CD8-positive, alpha-beta T cell (primary cell): ENCODE measurements at regions of chr7 and their contacts with region 1.

Region 1: GRCh38 chr7:107890962-107891635 is at the start of gene DLD:
- DNase-seq: peak; percentile 86 to 97 (median 93)
- ATAC-seq: peak; percentile 97
- H3K4me3 ChIP-seq: peak within 1 kb of the TSS; percentile 79 to 86
- H3K4me3 Mint-ChIP-seq: peak within 1 kb of the TSS; percentile 98
- H3K27ac ChIP-seq: peak within 1 kb of the TSS; percentile 88 to 94
- H3K27ac Mint-ChIP-seq: peak within 1 kb of the TSS; percentile 98
- H3K4me1 ChIP-seq: peaks cover 48% of the 10 kb centered on the region
- H3K4me1 Mint-ChIP-seq: peaks cover 48% of the 10 kb centered on the region
- H3K27me3 ChIP-seq: no peaks in the 10 kb centered on the region
- H3K27me3 Mint-ChIP-seq: no peaks in the 10 kb centered on the region
- CTCF ChIP-seq: no peak
- total RNA-seq, gene DLD: 83.5 to 85.9 TPM

Region 2: GRCh38 chr7:107462740-107463444 is 428.2 kb before region 1 on chr7:
- CTCF ChIA-PET with region 1: interaction called, 4 read pairs
- POLR2A ChIA-PET with region 1: no interaction called
- intact Hi-C with region 1: loop called in 1 of 2 experiments (anchors 5 kb)
- DNase-seq: peak in 8 of 9 experiments; percentile 3 to 72 (median 44)
- ATAC-seq: peak; percentile 65
- H3K4me3 ChIP-seq: no peak overlapping the region
- H3K4me3 Mint-ChIP-seq: no peak overlapping the region
- H3K27ac ChIP-seq: no peak overlapping the region
- H3K27ac Mint-ChIP-seq: no peak overlapping the region
- H3K4me1 ChIP-seq: no peaks in the 10 kb centered on the region
- H3K4me1 Mint-ChIP-seq: no peaks in the 10 kb centered on the region
- H3K27me3 ChIP-seq: no peaks in the 10 kb centered on the region
- H3K27me3 Mint-ChIP-seq: no peaks in the 10 kb centered on the region
- CTCF ChIP-seq: peak; percentile 69

Region 3: DNA sequence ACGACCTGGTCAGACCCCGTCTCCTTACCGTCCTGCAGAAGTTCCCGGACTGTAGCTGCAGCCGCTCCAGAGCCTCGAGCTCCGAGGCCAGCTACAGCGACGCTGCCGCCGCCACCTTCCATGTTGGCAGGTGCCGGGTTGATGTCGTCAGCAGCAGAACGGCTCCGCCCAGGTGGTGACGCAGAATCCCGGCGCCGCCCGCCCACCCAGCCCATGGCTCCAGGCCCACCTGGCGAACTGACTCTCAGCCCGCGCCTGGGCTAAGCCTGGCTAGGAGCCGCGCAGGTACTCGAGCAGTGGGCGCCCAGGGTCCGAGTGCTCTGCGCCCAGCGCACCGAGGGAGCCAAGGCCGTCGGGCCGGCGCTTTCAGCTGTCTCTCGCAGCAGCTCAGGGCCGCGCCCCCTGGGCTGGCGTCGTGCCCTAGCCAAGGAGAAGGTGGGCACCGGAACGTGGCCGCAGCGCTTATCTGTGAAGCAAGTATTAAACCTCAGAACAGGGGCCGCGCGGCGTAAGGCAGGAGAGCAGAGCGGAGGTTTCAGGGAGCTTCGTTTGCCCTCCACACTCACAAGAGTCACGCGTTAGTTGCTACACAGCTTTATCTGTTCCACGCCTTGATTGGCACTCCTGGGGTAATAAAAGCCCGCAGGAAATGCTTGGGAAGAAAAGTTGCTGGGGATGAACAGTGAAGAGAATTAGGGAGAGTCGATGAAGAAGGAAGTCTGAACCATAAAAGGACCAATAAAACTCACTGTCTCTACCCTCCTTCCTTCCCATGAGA is 327.1 kb before region 1 on chr7 and contains the starts of genes COG5 and DUS4L:
- CTCF ChIA-PET with region 1: no interaction called
- POLR2A ChIA-PET with region 1: interaction called, 4 read pairs
- intact Hi-C with region 1: loop called (anchors 1 to 5 kb)
- DNase-seq: peak; percentile 73 to 93 (median 86)
- ATAC-seq: peak; percentile 83
- H3K4me3 ChIP-seq: peak within 1 kb of the TSS; percentile 91 to 97
- H3K4me3 Mint-ChIP-seq: peak within 1 kb of the TSS; percentile 80
- H3K27ac ChIP-seq: peak within 1 kb of the TSS; percentile 95 to 96
- H3K27ac Mint-ChIP-seq: peak within 1 kb of the TSS; percentile 89
- H3K4me1 ChIP-seq: peaks cover 46% of the 10 kb centered on the region
- H3K4me1 Mint-ChIP-seq: peaks cover 65% of the 10 kb centered on the region
- H3K27me3 ChIP-seq: no peaks in the 10 kb centered on the region
- H3K27me3 Mint-ChIP-seq: no peaks in the 10 kb centered on the region
- CTCF ChIP-seq: no peak
- total RNA-seq, gene COG5: 45.7 to 46.8 TPM
- total RNA-seq, gene DUS4L: 13.1 to 16.4 TPM

Region 4: GRCh38 chr7:108525985-108526767 is 635.1 kb after region 1 on chr7 and contains the start of gene PNPLA8:
- CTCF ChIA-PET with region 1: no interaction called
- POLR2A ChIA-PET with region 1: no interaction called
- intact Hi-C with region 1: loop called in 1 of 2 experiments (anchors 1 kb)
- DNase-seq: peak; percentile 100
- ATAC-seq: peak; percentile 90
- H3K4me3 ChIP-seq: peak within 1 kb of the TSS; percentile 80 to 93
- H3K4me3 Mint-ChIP-seq: peak within 1 kb of the TSS; percentile 97
- H3K27ac ChIP-seq: peak within 1 kb of the TSS; percentile 94 to 96
- H3K27ac Mint-ChIP-seq: peak within 1 kb of the TSS; percentile 99
- H3K4me1 ChIP-seq: peaks cover 21% of the 10 kb centered on the region
- H3K4me1 Mint-ChIP-seq: peaks cover 48% of the 10 kb centered on the region
- H3K27me3 ChIP-seq: no peaks in the 10 kb centered on the region
- H3K27me3 Mint-ChIP-seq: no peaks in the 10 kb centered on the region
- CTCF ChIP-seq: no peak
- total RNA-seq, gene PNPLA8: 98.6 to 101 TPM

Region 5: DNA sequence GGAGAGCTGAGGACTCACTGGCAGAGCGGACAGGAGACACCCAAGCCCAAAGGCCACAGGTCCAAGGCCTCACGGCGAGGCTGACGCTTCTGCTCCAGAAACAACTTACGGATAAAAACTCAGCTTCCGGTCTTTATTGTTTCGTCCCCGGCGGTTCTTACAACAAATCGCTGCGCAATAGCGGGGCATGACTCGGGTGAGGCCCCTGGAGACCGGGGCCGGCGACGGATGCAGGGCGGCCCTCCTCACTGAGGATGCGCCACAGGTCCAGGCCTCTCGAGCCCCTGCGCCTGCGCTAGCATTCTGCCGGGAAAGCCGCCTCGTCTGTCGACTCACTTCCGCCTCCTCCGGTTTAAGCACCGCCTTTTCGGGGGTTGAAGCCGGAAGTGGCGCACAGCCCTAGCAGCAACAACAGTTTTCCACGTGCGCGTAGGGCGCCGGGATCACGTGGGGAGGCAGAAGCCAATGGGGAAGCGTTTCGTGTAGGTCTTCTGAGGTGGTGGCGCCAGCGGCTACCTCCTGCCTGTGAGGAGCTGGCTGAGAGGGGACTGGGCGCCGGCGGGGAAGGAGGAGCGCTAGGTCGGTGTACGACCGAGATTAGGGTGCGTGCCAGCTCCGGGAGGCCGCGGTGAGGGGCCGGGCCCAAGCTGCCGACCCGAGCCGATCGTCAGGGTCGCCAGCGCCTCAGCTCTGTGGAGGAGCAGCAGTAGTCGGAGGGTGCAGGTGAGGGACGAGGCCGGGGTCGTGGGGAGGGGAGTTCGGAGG is 678.5 kb after region 1 on chr7 and contains the starts of genes DNAJB9 and THAP5:
- CTCF ChIA-PET with region 1: no interaction called
- POLR2A ChIA-PET with region 1: no interaction called
- intact Hi-C with region 1: loop called in 1 of 2 experiments (anchors 1 kb)
- DNase-seq: peak; percentile 98 to 100 (median 99)
- ATAC-seq: peak; percentile 84
- H3K4me3 ChIP-seq: peak within 1 kb of the TSS; percentile 90 to 96
- H3K4me3 Mint-ChIP-seq: peak within 1 kb of the TSS; percentile 90
- H3K27ac ChIP-seq: peak within 1 kb of the TSS; percentile 99 to 100
- H3K27ac Mint-ChIP-seq: peak within 1 kb of the TSS; percentile 98
- H3K4me1 ChIP-seq: peaks cover 45% of the 10 kb centered on the region
- H3K4me1 Mint-ChIP-seq: peaks cover 65% of the 10 kb centered on the region
- H3K27me3 ChIP-seq: no peaks in the 10 kb centered on the region
- H3K27me3 Mint-ChIP-seq: no peaks in the 10 kb centered on the region
- CTCF ChIP-seq: no peak
- total RNA-seq, gene DNAJB9: 66.7 to 67.7 TPM
- total RNA-seq, gene THAP5: 10.7 to 13.5 TPM